Naive thymus-derived CD4-positive, alpha-beta T cell (primary cell): ENCODE measurements at regions of chr13 and their contacts with region 1.

Region 1: GRCh38 chr13:100573121-100573520 is 15.5 kb downstream of the GGACT start:
- DNase-seq: peak; percentile 51 to 74 (median 63)
- ATAC-seq: peak; percentile 92
- H3K4me3 ChIP-seq: no peak overlapping the region
- H3K4me3 Mint-ChIP-seq: no peak overlapping the region
- H3K27ac ChIP-seq: no peak overlapping the region
- H3K27ac Mint-ChIP-seq: peak overlapping the region in 1 of 9 donors; percentile 24
- H3K4me1 ChIP-seq: peaks cover 0 to 6% of the 10 kb centered on the region in 2 donors
- H3K4me1 Mint-ChIP-seq: peaks cover 9 to 28% (median 16%) of the 10 kb centered on the region in 7 donors
- H3K27me3 ChIP-seq: no peaks in the 10 kb centered on the region
- H3K27me3 Mint-ChIP-seq: no peaks in the 10 kb centered on the region

Region 2: GRCh38 chr13:100266026-100266425 is 307.1 kb before region 1 on chr13:
- CTCF ChIA-PET with region 1: no interaction called
- POLR2A ChIA-PET with region 1: no interaction called
- intact Hi-C with region 1: no loop called
- DNase-seq: no peak
- ATAC-seq: no peak
- H3K4me3 ChIP-seq: no peak overlapping the region
- H3K4me3 Mint-ChIP-seq: no peak overlapping the region
- H3K27ac ChIP-seq: no peak overlapping the region
- H3K27ac Mint-ChIP-seq: no peak overlapping the region
- H3K4me1 ChIP-seq: no peaks in the 10 kb centered on the region
- H3K4me1 Mint-ChIP-seq: no peaks in the 10 kb centered on the region
- H3K27me3 ChIP-seq: no peaks in the 10 kb centered on the region
- H3K27me3 Mint-ChIP-seq: no peaks in the 10 kb centered on the region

Region 3: DNA sequence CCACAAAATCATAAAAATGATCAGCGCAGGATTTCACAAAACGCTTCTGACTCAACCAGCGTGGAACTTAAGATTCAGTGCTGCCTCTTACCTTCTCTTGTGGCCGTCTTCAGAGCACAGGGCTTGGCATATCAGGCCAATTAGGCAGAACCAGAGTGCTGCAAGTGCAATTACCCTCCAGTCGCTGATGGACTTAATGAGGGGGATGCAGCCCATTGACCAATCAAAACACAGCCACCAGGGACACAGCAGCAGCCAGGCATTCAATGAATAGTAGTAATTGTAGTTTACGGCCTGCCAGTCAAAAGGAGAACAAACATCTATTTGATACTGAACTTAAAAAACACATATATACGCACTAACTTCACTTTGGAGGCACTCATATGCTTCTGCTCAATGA is 63.3 kb after region 1 on chr13:
- CTCF ChIA-PET with region 1: interaction called, 3 read pairs
- POLR2A ChIA-PET with region 1: no interaction called
- intact Hi-C with region 1: loop called in 1 of 2 experiments (anchors 5 kb)
- DNase-seq: no peak
- ATAC-seq: no peak
- H3K4me3 ChIP-seq: no peak overlapping the region
- H3K4me3 Mint-ChIP-seq: no peak overlapping the region
- H3K27ac ChIP-seq: no peak overlapping the region
- H3K27ac Mint-ChIP-seq: no peak overlapping the region
- H3K4me1 ChIP-seq: no peaks in the 10 kb centered on the region
- H3K4me1 Mint-ChIP-seq: peaks cover 0 to 4% (median 0%) of the 10 kb centered on the region in 7 donors
- H3K27me3 ChIP-seq: no peaks in the 10 kb centered on the region
- H3K27me3 Mint-ChIP-seq: no peaks in the 10 kb centered on the region

Region 4: GRCh38 chr13:101098873-101099272 is 525.8 kb after region 1 on chr13:
- CTCF ChIA-PET with region 1: interaction called, 3 read pairs
- POLR2A ChIA-PET with region 1: no interaction called
- intact Hi-C with region 1: loop called in 1 of 2 experiments (anchors 1 kb)
- DNase-seq: no peak
- ATAC-seq: no peak
- H3K4me3 ChIP-seq: no peak overlapping the region
- H3K4me3 Mint-ChIP-seq: no peak overlapping the region
- H3K27ac ChIP-seq: no peak overlapping the region
- H3K27ac Mint-ChIP-seq: no peak overlapping the region
- H3K4me1 ChIP-seq: no peaks in the 10 kb centered on the region
- H3K4me1 Mint-ChIP-seq: peaks cover 0 to 3% (median 0%) of the 10 kb centered on the region in 7 donors
- H3K27me3 ChIP-seq: no peaks in the 10 kb centered on the region
- H3K27me3 Mint-ChIP-seq: peaks cover 18 to 30% (median 20%) of the 10 kb centered on the region in 5 donors

Region 5: GRCh38 chr13:101127741-101128353 is 554.7 kb after region 1 on chr13:
- CTCF ChIA-PET with region 1: interaction called, 19 read pairs
- POLR2A ChIA-PET with region 1: no interaction called
- intact Hi-C with region 1: loop called (anchors 1 kb)
- DNase-seq: peak in 5 of 9 donors; percentile 16 to 36 (median 29)
- ATAC-seq: peak; percentile 80
- H3K4me3 ChIP-seq: no peak overlapping the region
- H3K4me3 Mint-ChIP-seq: no peak overlapping the region
- H3K27ac ChIP-seq: no peak overlapping the region
- H3K27ac Mint-ChIP-seq: no peak overlapping the region
- H3K4me1 ChIP-seq: no peaks in the 10 kb centered on the region
- H3K4me1 Mint-ChIP-seq: peaks cover 0 to 5% (median 0%) of the 10 kb centered on the region in 7 donors
- H3K27me3 ChIP-seq: peaks cover 0 to 2% of the 10 kb centered on the region in 2 donors
- H3K27me3 Mint-ChIP-seq: peaks cover 0 to 20% (median 15%) of the 10 kb centered on the region in 5 donors